CD4-positive, alpha-beta memory T cell (primary cell): ENCODE measurements at regions of chr12 and their contacts with region 1.

Region 1: DNA sequence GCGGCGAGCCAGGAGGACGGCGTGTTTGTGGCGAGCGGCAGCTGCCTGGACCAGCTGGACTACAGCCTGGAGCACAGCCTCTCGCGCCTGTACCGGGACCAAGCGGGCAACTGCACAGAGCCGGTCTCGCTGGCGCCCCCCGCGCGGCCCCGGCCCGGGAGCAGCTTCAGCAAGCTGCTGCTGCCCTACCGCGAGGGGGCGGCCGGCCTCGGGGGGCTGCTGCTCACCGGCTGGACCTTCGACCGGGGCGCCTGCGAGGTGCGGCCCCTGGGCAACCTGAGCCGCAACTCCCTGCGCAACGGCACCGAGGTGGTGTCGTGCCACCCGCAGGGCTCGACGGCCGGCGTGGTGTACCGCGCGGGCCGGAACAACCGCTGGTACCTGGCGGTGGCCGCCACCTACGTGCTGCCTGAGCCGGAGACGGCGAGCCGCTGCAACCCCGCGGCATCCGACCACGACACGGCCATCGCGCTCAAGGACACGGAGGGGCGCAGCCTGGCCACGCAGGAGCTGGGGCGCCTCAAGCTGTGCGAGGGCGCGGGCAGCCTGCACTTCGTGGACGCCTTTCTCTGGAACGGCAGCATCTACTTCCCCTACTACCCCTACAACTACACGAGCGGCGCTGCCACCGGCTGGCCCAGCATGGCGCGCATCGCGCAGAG is 873 bp downstream of the PLXNC1 start:
- DNase-seq: peak in 4 of 5 donors; percentile 40 to 54 (median 48)
- H3K4me3 ChIP-seq: peak overlapping the region; percentile 57 to 62
- H3K4me3 Mint-ChIP-seq: peak overlapping the region; percentile 92 to 98 (median 94)
- H3K27ac ChIP-seq: no peak overlapping the region
- H3K27ac Mint-ChIP-seq: peak overlapping the region in 1 of 7 donors; percentile 42
- H3K4me1 ChIP-seq: peaks cover 33% of the 10 kb centered on the region
- H3K4me1 Mint-ChIP-seq: peaks cover 27 to 56% (median 41%) of the 10 kb centered on the region in 4 donors
- H3K27me3 ChIP-seq: no peaks in the 10 kb centered on the region
- H3K27me3 Mint-ChIP-seq: no peaks in the 10 kb centered on the region

Region 2: GRCh38 chr12:93677195-93678064 is 471.8 kb before region 1 on chr12 and contains the start of gene CRADD:
- CTCF ChIA-PET with region 1: no interaction called
- POLR2A ChIA-PET with region 1: no interaction called
- intact Hi-C with region 1: loop called (anchors 1 kb)
- DNase-seq: peak; percentile 93 to 97 (median 96)
- H3K4me3 ChIP-seq: peak within 1 kb of the TSS; percentile 71 to 73
- H3K4me3 Mint-ChIP-seq: peak within 1 kb of the TSS; percentile 97 to 99 (median 98)
- H3K27ac ChIP-seq: peak within 1 kb of the TSS; percentile 99
- H3K27ac Mint-ChIP-seq: peak within 1 kb of the TSS; percentile 99 to 100 (median 100)
- H3K4me1 ChIP-seq: peaks cover 19% of the 10 kb centered on the region
- H3K4me1 Mint-ChIP-seq: peaks cover 20 to 37% (median 28%) of the 10 kb centered on the region in 4 donors
- H3K27me3 ChIP-seq: no peaks in the 10 kb centered on the region
- H3K27me3 Mint-ChIP-seq: peaks cover 11 to 12% of the 10 kb centered on the region in 2 donors
- total RNA-seq, gene CRADD: 15.7 to 16.0 TPM

Region 3: DNA sequence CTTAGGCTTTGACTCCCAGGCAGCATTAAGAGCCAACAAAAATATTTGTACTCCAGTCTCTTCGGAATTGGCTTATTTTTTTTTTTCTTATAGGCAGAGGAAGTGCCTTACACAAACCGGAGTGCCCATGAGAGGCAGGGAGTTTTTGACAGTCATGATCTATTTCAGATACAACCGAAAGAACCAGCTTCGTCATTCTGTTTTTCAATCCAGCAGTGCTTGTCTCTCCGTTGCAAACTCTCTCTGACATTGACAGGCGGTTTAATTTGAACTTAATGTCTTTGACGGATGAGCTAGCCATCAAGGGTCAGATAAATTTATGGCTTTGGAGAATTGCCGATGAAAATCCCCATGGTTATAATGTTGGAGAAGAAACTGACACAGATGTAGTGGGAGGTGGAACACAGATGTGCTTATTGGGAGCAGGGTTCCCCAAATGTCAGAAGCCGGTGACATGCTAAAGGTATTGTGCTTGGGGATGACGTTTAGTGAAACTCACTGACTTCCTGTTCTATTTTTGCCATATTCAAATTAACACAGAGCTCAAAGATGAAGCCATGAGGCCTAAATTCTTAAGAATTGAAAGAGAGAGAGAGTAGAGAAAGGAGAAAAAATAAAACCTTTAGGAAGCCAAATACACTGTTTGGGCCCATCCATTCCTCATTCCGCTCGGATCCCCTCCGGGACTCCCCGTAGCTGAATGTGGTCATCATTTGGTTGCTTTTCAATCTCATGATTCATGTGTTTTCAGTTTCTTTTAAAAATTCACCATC is 58.8 kb after region 1 on chr12:
- CTCF ChIA-PET with region 1: interaction called, 4 read pairs
- POLR2A ChIA-PET with region 1: interaction called, 58 read pairs
- intact Hi-C with region 1: loop called (anchors 1 kb)
- DNase-seq: peak; percentile 45 to 69 (median 56)
- H3K4me3 ChIP-seq: peak overlapping the region; percentile 25 to 51
- H3K4me3 Mint-ChIP-seq: peak overlapping the region; percentile 78 to 93 (median 84)
- H3K27ac ChIP-seq: peak overlapping the region; percentile 67
- H3K27ac Mint-ChIP-seq: peak overlapping the region; percentile 89 to 98 (median 96)
- H3K4me1 ChIP-seq: peaks cover 59% of the 10 kb centered on the region
- H3K4me1 Mint-ChIP-seq: peaks cover 47 to 68% (median 55%) of the 10 kb centered on the region in 4 donors
- H3K27me3 ChIP-seq: no peaks in the 10 kb centered on the region
- H3K27me3 Mint-ChIP-seq: no peaks in the 10 kb centered on the region

Region 4: GRCh38 chr12:94435511-94435927 is 286.3 kb after region 1 on chr12:
- CTCF ChIA-PET with region 1: interaction called, 26 read pairs
- POLR2A ChIA-PET with region 1: interaction called, 3 read pairs
- intact Hi-C with region 1: loop called (anchors 2 kb)
- DNase-seq: no peak
- H3K4me3 ChIP-seq: no peak overlapping the region
- H3K4me3 Mint-ChIP-seq: no peak overlapping the region
- H3K27ac ChIP-seq: no peak overlapping the region
- H3K27ac Mint-ChIP-seq: peak overlapping the region in 1 of 7 donors; percentile 29
- H3K4me1 ChIP-seq: no peaks in the 10 kb centered on the region
- H3K4me1 Mint-ChIP-seq: peaks cover 0 to 12% (median 4%) of the 10 kb centered on the region in 4 donors
- H3K27me3 ChIP-seq: no peaks in the 10 kb centered on the region
- H3K27me3 Mint-ChIP-seq: no peaks in the 10 kb centered on the region

Region 5: GRCh38 chr12:94649349-94650142 is 500.3 kb after region 1 on chr12:
- CTCF ChIA-PET with region 1: no interaction called
- POLR2A ChIA-PET with region 1: no interaction called
- intact Hi-C with region 1: loop called (anchors 10 kb)
- DNase-seq: peak in 4 of 5 donors; percentile 21 to 36 (median 30)
- H3K4me3 ChIP-seq: peak overlapping the region in 1 of 2 donors; percentile 16
- H3K4me3 Mint-ChIP-seq: peak overlapping the region; percentile 60 to 86 (median 80)
- H3K27ac ChIP-seq: no peak overlapping the region
- H3K27ac Mint-ChIP-seq: peak overlapping the region in 1 of 7 donors; percentile 63
- H3K4me1 ChIP-seq: no peaks in the 10 kb centered on the region
- H3K4me1 Mint-ChIP-seq: peaks cover 4 to 30% (median 13%) of the 10 kb centered on the region in 4 donors
- H3K27me3 ChIP-seq: peaks cover 13% of the 10 kb centered on the region
- H3K27me3 Mint-ChIP-seq: peaks cover 34 to 46% of the 10 kb centered on the region in 2 donors

Region 6: DNA sequence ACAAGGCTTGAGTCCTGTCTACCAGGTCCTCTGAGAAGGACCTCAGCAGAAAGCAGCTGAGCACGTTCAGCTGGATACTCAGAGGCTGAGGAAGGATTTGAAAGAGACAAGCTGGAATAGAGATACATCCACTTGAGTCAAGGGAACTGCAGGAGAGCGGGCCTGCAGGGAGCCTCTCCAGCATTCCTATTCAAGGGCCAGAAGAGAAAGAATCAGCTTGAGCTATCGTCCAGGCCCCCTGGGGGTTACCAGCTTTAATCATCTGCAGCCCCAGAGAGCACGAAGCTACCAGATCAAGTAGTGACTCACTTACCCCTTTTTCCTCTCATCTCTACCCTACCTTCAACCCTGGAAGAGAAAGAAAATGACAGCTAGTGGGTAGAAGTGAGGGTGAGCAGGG is 773.3 kb after region 1 on chr12:
- CTCF ChIA-PET with region 1: no interaction called
- POLR2A ChIA-PET with region 1: no interaction called
- intact Hi-C with region 1: no loop called
- DNase-seq: no peak
- H3K4me3 ChIP-seq: no peak overlapping the region
- H3K4me3 Mint-ChIP-seq: no peak overlapping the region
- H3K27ac ChIP-seq: no peak overlapping the region
- H3K27ac Mint-ChIP-seq: no peak overlapping the region
- H3K4me1 ChIP-seq: no peaks in the 10 kb centered on the region
- H3K4me1 Mint-ChIP-seq: no peaks in the 10 kb centered on the region
- H3K27me3 ChIP-seq: no peaks in the 10 kb centered on the region
- H3K27me3 Mint-ChIP-seq: no peaks in the 10 kb centered on the region

Region 7: DNA sequence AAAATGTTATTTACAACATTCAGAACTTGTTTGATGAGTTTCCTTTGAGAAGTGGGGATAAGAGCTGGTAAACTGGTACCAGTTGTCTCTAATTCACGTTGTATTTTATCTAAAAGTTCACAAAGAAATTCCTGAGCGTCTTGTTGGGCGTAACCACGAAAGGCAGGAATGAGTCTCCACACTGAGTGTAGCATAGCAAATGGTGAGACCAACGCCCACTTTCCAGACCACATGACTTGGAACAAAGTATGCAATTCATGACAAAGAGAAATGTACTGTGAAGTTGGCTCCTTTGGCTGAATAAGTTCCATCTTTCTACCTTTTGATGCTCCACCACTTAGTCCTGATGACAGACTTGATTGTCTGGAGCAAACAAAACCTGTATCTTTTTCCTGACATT is 1383.6 kb after region 1 on chr12:
- CTCF ChIA-PET with region 1: no interaction called
- POLR2A ChIA-PET with region 1: no interaction called
- intact Hi-C with region 1: loop called (anchors 10 kb)
- DNase-seq: no peak
- H3K4me3 ChIP-seq: no peak overlapping the region
- H3K4me3 Mint-ChIP-seq: no peak overlapping the region
- H3K27ac ChIP-seq: no peak overlapping the region
- H3K27ac Mint-ChIP-seq: no peak overlapping the region
- H3K4me1 ChIP-seq: no peaks in the 10 kb centered on the region
- H3K4me1 Mint-ChIP-seq: peaks cover 0 to 2% (median under 1%) of the 10 kb centered on the region in 4 donors
- H3K27me3 ChIP-seq: no peaks in the 10 kb centered on the region
- H3K27me3 Mint-ChIP-seq: no peaks in the 10 kb centered on the region